MCF 10A (cell line): ENCODE measurements at regions of chr15 and their contacts with region 1.

Region 1: DNA sequence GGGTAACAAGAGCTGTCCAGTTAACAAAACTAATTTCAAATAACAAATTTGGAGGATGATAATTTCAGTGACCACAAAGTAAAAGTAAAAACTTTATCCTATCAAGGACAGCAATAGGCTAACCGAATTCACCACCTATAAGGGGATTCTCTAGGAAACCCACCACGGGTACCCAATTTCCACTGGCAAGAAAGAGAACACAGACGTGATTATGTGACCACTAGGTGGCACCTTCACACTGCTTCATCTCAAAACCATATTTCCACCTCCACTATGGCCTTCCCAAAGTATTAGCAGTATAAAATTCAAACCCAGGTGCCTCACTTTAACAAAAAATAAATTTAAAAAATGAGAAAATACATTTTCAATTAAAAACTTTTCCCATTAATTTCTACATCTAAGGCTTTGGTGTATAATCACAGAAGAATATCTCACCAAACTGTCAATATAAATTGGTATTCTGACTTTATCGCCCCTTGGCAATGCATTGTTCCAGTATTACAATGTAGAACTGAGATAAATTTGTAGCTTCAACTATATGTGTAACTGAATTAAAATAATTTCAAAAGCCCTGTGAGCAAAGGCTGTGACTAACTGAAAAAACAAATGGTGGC is 96.5 kb downstream of the FSIP1 start:
- DNase-seq: peak; percentile 62
- H3K4me3 Mint-ChIP-seq: no peak overlapping the region
- H3K27ac Mint-ChIP-seq: no peak overlapping the region
- H3K4me1 Mint-ChIP-seq: no peaks in the 10 kb centered on the region
- H3K27me3 Mint-ChIP-seq: no peaks in the 10 kb centered on the region
- CTCF ChIP-seq: peak; percentile 67

Region 2: DNA sequence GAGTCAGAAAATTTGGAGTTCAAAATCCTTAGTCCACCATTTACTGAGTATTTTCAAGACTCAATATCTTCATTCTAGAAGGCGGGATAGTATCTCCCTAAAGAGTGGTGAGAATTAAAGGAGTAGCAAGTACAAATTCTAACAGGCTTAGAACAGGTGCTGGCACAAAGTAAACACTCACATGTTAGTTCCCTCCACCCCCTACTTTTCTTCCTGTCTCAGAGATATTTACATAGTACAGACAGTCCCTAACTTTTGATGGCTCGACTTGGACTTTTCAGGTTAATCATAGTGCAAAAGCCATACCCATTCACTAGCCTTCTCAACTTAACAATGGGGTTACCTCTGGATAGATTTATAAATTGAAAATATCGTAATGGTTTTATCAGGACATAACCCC is 645.2 kb before region 1 on chr15:
- CTCF ChIA-PET with region 1: no interaction called
- POLR2A ChIA-PET with region 1: no interaction called
- intact Hi-C with region 1: no loop called
- DNase-seq: no peak
- H3K4me3 Mint-ChIP-seq: no peak overlapping the region
- H3K27ac Mint-ChIP-seq: no peak overlapping the region
- H3K4me1 Mint-ChIP-seq: no peaks in the 10 kb centered on the region
- H3K27me3 Mint-ChIP-seq: no peaks in the 10 kb centered on the region
- CTCF ChIP-seq: no peak

Region 3: GRCh38 chr15:39699516-39700374 is 13.6 kb after region 1 on chr15:
- CTCF ChIA-PET with region 1: interaction called, 24 read pairs
- POLR2A ChIA-PET with region 1: no interaction called
- intact Hi-C with region 1: no loop called
- DNase-seq: no peak
- H3K4me3 Mint-ChIP-seq: no peak overlapping the region
- H3K27ac Mint-ChIP-seq: no peak overlapping the region
- H3K4me1 Mint-ChIP-seq: peaks cover 3% of the 10 kb centered on the region
- H3K27me3 Mint-ChIP-seq: no peaks in the 10 kb centered on the region
- CTCF ChIP-seq: no peak

Region 4: GRCh38 chr15:39736412-39737197 is 50.5 kb after region 1 on chr15:
- CTCF ChIA-PET with region 1: interaction called, 10 read pairs
- POLR2A ChIA-PET with region 1: no interaction called
- intact Hi-C with region 1: no loop called
- DNase-seq: no peak
- H3K4me3 Mint-ChIP-seq: no peak overlapping the region
- H3K27ac Mint-ChIP-seq: no peak overlapping the region
- H3K4me1 Mint-ChIP-seq: no peaks in the 10 kb centered on the region
- H3K27me3 Mint-ChIP-seq: no peaks in the 10 kb centered on the region
- CTCF ChIP-seq: no peak

Region 5: DNA sequence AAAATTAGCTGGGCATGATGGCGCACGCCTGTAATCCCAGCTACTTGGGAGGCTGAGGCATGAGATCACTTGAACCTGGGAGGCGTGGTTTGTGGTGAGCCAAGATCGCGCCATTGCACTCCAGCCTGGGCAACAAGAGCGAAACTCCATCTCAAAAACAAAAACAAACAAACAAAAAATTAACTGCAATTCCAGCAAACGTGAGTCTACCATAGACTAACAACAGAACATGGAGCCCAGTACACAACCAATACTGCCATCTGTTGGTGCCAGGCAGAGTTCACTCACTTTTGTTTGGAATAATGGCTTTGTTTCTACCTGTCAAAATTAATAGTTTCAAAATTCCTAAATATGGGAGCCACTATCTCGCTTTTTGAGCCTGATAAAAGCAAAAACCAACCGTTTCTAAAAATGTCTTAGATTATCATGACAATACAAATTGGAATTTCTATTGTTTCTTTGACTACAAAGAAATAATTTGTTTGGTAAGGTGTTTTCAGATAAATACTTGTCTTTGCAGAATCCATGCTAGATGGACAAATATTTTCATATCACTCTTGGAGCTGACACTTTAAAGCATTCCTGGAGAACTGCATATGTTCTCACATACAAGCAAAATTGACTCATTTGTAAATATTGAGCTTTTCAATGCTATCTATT is 188.9 kb after region 1 on chr15:
- CTCF ChIA-PET with region 1: interaction called, 19 read pairs
- POLR2A ChIA-PET with region 1: no interaction called
- intact Hi-C with region 1: loop called (anchors 2 kb)
- DNase-seq: peak; percentile 62
- H3K4me3 Mint-ChIP-seq: no peak overlapping the region
- H3K27ac Mint-ChIP-seq: no peak overlapping the region
- H3K4me1 Mint-ChIP-seq: no peaks in the 10 kb centered on the region
- H3K27me3 Mint-ChIP-seq: no peaks in the 10 kb centered on the region
- CTCF ChIP-seq: peak; percentile 68